G401 (cell line): ENCODE measurements at regions of chr20 and their contacts with region 1.

Region 1: GRCh38 chr20:49982346-49983122 is at the start of gene SNAI1:
- DNase-seq: peak; percentile 67
- total RNA-seq, gene SNAI1: 2.9 and 7.5 TPM in 2 replicates

Region 2: GRCh38 chr20:50153485-50154377 is 171.2 kb after region 1 on chr20 and contains the start of gene PEDS1:
- in situ Hi-C with region 1: loop called (anchors 10 kb)
- DNase-seq: peak; percentile 78
- total RNA-seq, gene PEDS1: 42.7 and 45.5 TPM in 2 replicates